MCF 10A (cell line): ENCODE measurements at regions of chr11 and their contacts with region 1.

Region 1: DNA sequence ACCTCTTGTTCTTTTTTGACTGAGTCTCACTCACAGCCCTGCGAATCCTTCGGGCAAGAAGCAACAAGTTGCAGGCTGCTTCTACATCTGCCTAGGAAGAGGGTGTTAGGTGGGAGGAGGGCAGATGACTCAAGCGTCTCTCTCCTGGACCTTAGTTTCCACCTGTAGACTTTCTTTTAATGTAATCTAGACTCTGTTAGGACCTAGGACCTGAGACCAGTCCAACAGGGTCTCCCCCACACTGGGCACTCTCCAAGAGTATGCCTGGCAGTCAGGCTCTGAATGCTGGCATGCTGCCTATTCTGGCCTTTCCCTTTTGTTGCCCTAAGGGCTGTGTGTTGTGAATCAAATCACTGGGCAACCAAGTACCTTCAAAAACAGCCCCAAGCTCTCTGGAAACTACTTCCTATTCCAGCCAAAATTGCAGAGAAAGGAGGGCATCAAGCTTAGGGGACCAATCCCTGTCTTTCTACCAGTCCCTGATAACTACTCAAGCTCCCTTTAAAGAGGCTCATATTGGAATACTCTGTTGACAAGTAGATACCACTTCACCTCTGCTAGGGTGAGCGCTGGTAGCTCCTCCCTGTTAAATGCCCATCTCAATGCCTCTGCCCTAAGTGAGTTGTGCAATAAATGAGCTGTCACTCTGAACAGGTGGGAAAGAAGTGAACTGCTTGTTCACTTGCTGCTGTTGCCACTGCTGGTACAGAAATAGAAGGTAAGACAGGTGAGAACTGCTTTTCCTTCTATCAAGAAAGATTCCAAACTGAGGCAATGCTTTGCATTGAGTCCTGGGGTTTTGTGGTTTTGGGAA is at the start of gene BBOX1:
- DNase-seq: peak; percentile 92
- H3K4me3 Mint-ChIP-seq: peak within 1 kb of the TSS; percentile 59
- H3K27ac Mint-ChIP-seq: peak within 1 kb of the TSS; percentile 91
- H3K4me1 Mint-ChIP-seq: peaks cover 25% of the 10 kb centered on the region
- H3K27me3 Mint-ChIP-seq: no peaks in the 10 kb centered on the region
- CTCF ChIP-seq: no peak
- total RNA-seq, gene BBOX1: 0.33 TPM in 1 of 2 replicates, not detected in the other

Region 2: DNA sequence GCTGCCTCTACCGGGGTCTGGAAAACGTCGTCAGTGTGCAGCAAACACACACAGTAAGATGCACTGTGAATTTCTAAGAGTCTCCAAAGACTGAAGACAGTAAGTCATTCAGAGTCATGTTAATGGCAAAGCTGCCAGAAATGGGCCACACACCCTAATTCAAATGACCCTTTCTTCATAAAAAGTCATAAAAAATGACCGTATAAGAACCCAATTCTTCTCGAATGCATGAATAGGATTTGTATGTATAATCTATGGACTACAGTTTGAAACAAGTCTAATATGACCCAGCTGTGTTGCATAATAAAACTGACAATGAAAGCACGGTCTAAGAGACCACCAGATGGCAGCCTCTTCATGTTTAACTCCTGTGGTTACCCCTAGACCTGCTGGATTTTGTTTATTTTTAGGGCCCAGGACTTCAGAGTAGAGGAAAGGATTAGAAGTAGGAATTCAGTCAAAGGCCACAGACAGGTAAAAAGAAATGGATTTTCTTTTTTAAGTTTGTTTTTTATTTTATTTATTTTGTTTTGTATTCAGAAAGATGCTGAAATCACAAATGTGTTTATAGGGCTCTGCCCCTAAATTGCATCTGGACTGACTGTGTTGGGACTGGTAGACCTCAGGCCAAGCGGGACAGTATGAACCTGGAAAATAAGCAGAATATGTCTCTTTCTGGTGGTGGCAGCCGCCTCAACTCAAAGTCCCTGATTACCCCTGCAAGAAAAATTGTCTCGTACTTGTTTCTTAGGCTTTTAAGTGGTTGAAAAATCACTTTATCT is 286.6 kb before region 1 on chr11:
- CTCF ChIA-PET with region 1: interaction called, 3 read pairs
- POLR2A ChIA-PET with region 1: no interaction called
- intact Hi-C with region 1: loop called (anchors 1 kb)
- DNase-seq: peak; percentile 75
- H3K4me3 Mint-ChIP-seq: no peak overlapping the region
- H3K27ac Mint-ChIP-seq: no peak overlapping the region
- H3K4me1 Mint-ChIP-seq: no peaks in the 10 kb centered on the region
- H3K27me3 Mint-ChIP-seq: no peaks in the 10 kb centered on the region
- CTCF ChIP-seq: peak; percentile 84

Region 3: DNA sequence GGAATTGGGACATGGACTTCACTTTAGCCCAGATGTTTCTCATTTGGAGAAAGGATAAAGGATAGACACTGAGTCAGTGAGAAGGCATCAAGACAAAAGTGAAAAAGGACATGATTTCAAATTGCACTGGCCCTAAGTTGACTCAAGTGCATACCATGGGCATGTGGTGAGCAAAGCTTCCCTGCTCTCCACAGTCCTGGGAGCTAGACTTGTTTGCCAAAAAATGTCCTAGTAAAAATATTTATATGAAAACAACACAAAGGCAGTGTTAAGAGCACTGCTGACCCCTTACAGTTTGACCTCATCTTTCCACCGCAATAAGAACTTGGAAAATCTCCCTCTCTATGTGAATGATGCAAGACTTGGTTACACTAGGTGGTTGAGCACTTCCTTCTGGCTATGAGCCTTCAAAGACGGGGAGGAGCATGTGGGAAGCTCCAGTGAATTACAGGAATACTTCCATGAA is 93.1 kb before region 1 on chr11:
- CTCF ChIA-PET with region 1: interaction called, 3 read pairs
- POLR2A ChIA-PET with region 1: interaction called, 17 read pairs
- intact Hi-C with region 1: no loop called
- DNase-seq: peak; percentile 94
- H3K4me3 Mint-ChIP-seq: no peak overlapping the region
- H3K27ac Mint-ChIP-seq: peak overlapping the region; percentile 81
- H3K4me1 Mint-ChIP-seq: peaks cover 51% of the 10 kb centered on the region
- H3K27me3 Mint-ChIP-seq: no peaks in the 10 kb centered on the region
- CTCF ChIP-seq: no peak

Region 4: GRCh38 chr11:26974069-26974783 is 66.3 kb before region 1 on chr11:
- CTCF ChIA-PET with region 1: no interaction called
- POLR2A ChIA-PET with region 1: no interaction called
- intact Hi-C with region 1: no loop called
- DNase-seq: no peak
- H3K4me3 Mint-ChIP-seq: no peak overlapping the region
- H3K27ac Mint-ChIP-seq: no peak overlapping the region
- H3K4me1 Mint-ChIP-seq: no peaks in the 10 kb centered on the region
- H3K27me3 Mint-ChIP-seq: no peaks in the 10 kb centered on the region
- CTCF ChIP-seq: no peak

Region 5: GRCh38 chr11:27084518-27084917 is 44.0 kb after region 1 on chr11:
- CTCF ChIA-PET with region 1: interaction called, 27 read pairs
- POLR2A ChIA-PET with region 1: interaction called, 49 read pairs
- intact Hi-C with region 1: no loop called
- DNase-seq: no peak
- H3K4me3 Mint-ChIP-seq: no peak overlapping the region
- H3K27ac Mint-ChIP-seq: no peak overlapping the region
- H3K4me1 Mint-ChIP-seq: peaks cover 32% of the 10 kb centered on the region
- H3K27me3 Mint-ChIP-seq: no peaks in the 10 kb centered on the region
- CTCF ChIP-seq: no peak

Region 6: DNA sequence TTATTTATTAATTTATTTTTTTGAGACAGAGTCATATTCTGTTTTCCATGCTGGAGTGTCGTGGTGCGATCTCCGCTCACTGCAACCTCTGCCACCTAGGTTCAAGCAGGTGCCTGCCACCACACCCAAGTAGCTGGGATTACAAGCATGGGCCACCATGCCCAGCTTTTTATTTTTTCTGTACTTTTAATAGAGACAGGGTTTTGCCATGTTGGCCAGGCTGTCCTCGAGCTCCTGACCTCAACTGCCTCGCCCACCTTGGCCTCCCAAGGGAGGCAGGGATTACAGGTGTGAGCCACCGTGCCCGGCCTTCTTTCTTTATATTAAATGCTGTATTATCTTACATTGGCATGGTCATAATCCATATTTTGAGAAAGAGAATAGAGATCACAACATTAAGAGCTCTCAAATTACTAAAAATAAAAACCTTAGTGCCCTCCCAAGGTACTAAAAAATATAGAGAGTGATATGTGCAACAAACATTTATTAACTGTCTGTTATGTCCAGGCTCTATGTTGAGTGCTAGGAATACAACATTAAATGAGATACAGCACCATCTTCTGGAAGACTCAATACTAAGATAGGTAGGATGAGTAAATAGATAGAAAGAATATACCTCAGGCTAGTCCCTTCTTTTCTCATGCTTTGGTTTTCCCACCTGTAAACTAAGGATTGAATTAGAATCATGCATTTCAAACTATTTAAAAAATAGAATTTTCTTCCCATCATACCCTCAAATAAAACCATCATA is 84.2 kb after region 1 on chr11:
- CTCF ChIA-PET with region 1: interaction called, 10 read pairs
- POLR2A ChIA-PET with region 1: no interaction called
- intact Hi-C with region 1: loop called (anchors 2 kb)
- DNase-seq: peak; percentile 45
- H3K4me3 Mint-ChIP-seq: no peak overlapping the region
- H3K27ac Mint-ChIP-seq: no peak overlapping the region
- H3K4me1 Mint-ChIP-seq: peaks cover 5% of the 10 kb centered on the region
- H3K27me3 Mint-ChIP-seq: no peaks in the 10 kb centered on the region
- CTCF ChIP-seq: peak; percentile 28